Calu3 (cell line): ENCODE measurements at regions of chr10 and their contacts with region 1.

Region 1: DNA sequence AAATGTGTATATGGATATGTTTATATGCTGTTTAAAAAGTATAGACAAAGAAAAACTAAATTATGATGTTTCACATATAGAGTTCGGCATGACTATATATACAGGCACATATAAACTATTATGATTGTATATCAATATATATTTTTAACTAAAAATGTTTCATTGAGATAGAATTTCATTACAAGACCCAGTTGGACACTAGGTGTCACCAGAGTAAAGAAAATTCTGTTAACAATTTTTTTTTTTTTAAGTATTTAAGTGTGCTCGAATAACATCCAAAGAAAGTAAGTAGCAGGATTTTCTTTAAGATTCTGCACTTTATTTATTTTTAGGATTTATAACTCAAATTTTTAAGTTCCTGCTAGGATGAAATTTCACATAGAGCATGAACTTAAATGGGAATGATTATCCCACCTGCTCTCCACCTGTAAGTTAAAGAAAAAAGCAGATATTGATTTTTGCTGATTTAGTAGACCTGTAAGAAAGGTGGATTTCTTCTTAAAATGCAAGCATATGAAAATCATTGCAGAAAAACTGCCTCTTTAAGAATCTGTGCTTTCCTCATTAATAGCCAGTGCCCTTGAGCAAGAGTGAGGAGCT is 961.5 kb downstream of the PCDH15 start:
- DNase-seq: no peak
- H3K4me3 Mint-ChIP-seq: no peak overlapping the region
- H3K27ac Mint-ChIP-seq: no peak overlapping the region
- H3K4me1 Mint-ChIP-seq: peaks cover 10% of the 10 kb centered on the region
- H3K27me3 Mint-ChIP-seq: no peaks in the 10 kb centered on the region
- CTCF ChIP-seq: no peak

Region 2: DNA sequence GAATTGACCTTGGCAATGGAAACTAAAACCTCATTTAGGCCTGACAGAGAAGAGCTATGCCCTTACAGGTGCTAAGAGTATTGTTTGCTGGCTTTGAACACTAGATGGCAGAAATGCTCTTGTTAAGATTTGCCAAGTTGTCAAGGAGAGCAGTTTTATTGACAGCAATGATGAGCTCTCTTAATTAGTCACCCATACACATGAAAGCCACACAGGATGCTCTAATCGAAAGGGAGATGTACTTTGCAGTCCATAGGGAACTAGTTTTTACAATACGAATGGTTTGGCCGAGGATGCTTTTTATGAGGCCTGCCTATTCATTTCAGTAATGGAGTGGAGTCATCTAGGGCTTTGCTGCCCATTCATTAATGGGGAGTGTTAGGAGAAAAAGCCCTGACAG is 1021.5 kb before region 1 on chr10:
- CTCF ChIA-PET with region 1: no interaction called
- intact Hi-C with region 1: loop called (anchors 10 kb)
- DNase-seq: peak; percentile 30
- H3K4me3 Mint-ChIP-seq: no peak overlapping the region
- H3K27ac Mint-ChIP-seq: no peak overlapping the region
- H3K4me1 Mint-ChIP-seq: no peaks in the 10 kb centered on the region
- H3K27me3 Mint-ChIP-seq: no peaks in the 10 kb centered on the region
- CTCF ChIP-seq: peak; percentile 29

Region 3: GRCh38 chr10:52883996-52884871 is 955.3 kb before region 1 on chr10:
- CTCF ChIA-PET with region 1: no interaction called
- intact Hi-C with region 1: loop called (anchors 10 kb)
- DNase-seq: peak; percentile 82
- H3K4me3 Mint-ChIP-seq: peak overlapping the region; percentile 63
- H3K27ac Mint-ChIP-seq: peak overlapping the region; percentile 70
- H3K4me1 Mint-ChIP-seq: no peaks in the 10 kb centered on the region
- H3K27me3 Mint-ChIP-seq: peaks cover 7% of the 10 kb centered on the region
- CTCF ChIP-seq: peak; percentile 75

Region 4: DNA sequence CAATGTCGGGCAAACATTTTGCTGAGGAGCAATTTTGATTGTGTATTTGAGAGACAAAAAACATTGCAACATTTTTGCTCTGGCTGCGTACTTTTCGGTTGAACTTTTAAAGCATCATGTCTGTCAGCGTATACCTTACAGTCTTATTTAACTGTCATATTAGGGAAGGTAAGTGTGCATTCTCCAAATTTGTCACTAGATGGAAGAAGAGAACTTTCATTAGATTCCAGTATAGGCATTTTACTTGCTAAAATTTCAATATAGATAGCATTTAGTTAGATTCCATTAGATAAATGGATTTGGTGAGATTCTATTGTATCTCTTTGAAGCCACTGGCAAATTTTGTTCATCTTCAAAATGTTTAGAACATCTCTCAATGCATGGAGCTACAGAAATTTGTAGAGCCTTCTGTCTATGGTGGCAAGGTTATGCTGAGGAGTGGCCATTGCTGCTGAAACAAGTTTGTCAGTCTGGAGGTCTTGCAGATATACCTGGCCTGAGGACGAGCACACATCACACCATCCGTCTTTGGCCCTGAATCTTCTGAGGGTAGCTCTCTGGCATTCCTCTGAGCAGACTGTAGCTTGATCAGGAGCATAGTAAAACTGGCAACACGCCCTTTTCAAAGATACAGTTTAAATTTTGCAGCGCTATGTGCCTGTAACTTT is 629.5 kb before region 1 on chr10:
- CTCF ChIA-PET with region 1: no interaction called
- intact Hi-C with region 1: loop called (anchors 5 kb)
- DNase-seq: no peak
- H3K4me3 Mint-ChIP-seq: no peak overlapping the region
- H3K27ac Mint-ChIP-seq: no peak overlapping the region
- H3K4me1 Mint-ChIP-seq: no peaks in the 10 kb centered on the region
- H3K27me3 Mint-ChIP-seq: no peaks in the 10 kb centered on the region
- CTCF ChIP-seq: no peak

Region 5: GRCh38 chr10:53997953-53998352 is 158.4 kb after region 1 on chr10:
- CTCF ChIA-PET with region 1: no interaction called
- intact Hi-C with region 1: loop called (anchors 5 kb)
- DNase-seq: no peak
- H3K4me3 Mint-ChIP-seq: no peak overlapping the region
- H3K27ac Mint-ChIP-seq: no peak overlapping the region
- H3K4me1 Mint-ChIP-seq: no peaks in the 10 kb centered on the region
- H3K27me3 Mint-ChIP-seq: no peaks in the 10 kb centered on the region
- CTCF ChIP-seq: peak; percentile 29

Region 6: DNA sequence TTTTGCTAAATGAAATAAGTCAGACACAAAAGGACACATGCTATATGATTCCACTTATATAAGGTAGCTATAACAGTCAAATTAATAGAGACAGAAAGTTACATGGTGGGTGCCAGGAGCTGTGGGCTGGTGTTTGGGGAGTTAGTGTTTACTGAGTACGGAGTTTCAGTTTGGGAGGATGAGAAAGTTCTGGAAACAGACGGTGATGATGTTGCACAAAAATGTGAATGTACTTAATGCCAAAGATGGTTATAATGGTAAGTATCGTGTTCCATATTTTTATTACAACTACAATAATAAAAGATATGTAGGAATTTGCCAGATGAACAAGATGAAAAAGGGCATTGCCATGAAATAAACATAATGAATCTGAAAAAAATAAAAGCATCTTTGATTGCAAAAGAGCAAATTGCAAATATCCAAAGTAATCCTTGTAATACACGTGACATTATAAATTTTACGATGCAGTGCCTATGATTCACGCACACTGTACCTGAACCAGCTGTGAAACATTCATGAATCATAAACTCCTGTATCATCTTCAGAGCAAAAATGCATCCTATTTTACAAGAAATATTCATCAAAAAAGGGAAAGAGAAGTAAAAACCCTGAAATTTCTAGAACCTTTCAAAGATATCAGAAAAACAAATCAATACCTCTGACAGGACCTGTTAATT is 284.8 kb after region 1 on chr10:
- CTCF ChIA-PET with region 1: no interaction called
- intact Hi-C with region 1: loop called (anchors 10 kb)
- DNase-seq: no peak
- H3K4me3 Mint-ChIP-seq: no peak overlapping the region
- H3K27ac Mint-ChIP-seq: no peak overlapping the region
- H3K4me1 Mint-ChIP-seq: no peaks in the 10 kb centered on the region
- H3K27me3 Mint-ChIP-seq: no peaks in the 10 kb centered on the region
- CTCF ChIP-seq: no peak

Region 7: GRCh38 chr10:54262726-54263125 is 423.2 kb after region 1 on chr10:
- CTCF ChIA-PET with region 1: no interaction called
- intact Hi-C with region 1: no loop called
- DNase-seq: no peak
- H3K4me3 Mint-ChIP-seq: no peak overlapping the region
- H3K27ac Mint-ChIP-seq: no peak overlapping the region
- H3K4me1 Mint-ChIP-seq: no peaks in the 10 kb centered on the region
- H3K27me3 Mint-ChIP-seq: no peaks in the 10 kb centered on the region
- CTCF ChIP-seq: no peak

Region 8: GRCh38 chr10:54402576-54402975 is 563.0 kb after region 1 on chr10:
- CTCF ChIA-PET with region 1: interaction called, 3 read pairs
- intact Hi-C with region 1: loop called (anchors 1 kb)
- DNase-seq: peak; percentile 37
- H3K4me3 Mint-ChIP-seq: no peak overlapping the region
- H3K27ac Mint-ChIP-seq: no peak overlapping the region
- H3K4me1 Mint-ChIP-seq: no peaks in the 10 kb centered on the region
- H3K27me3 Mint-ChIP-seq: no peaks in the 10 kb centered on the region
- CTCF ChIP-seq: peak; percentile 67